Posterior vena cava (tissue), 2 donors: ENCODE measurements at regions of chr16 and their contacts with region 1.

Region 1: DNA sequence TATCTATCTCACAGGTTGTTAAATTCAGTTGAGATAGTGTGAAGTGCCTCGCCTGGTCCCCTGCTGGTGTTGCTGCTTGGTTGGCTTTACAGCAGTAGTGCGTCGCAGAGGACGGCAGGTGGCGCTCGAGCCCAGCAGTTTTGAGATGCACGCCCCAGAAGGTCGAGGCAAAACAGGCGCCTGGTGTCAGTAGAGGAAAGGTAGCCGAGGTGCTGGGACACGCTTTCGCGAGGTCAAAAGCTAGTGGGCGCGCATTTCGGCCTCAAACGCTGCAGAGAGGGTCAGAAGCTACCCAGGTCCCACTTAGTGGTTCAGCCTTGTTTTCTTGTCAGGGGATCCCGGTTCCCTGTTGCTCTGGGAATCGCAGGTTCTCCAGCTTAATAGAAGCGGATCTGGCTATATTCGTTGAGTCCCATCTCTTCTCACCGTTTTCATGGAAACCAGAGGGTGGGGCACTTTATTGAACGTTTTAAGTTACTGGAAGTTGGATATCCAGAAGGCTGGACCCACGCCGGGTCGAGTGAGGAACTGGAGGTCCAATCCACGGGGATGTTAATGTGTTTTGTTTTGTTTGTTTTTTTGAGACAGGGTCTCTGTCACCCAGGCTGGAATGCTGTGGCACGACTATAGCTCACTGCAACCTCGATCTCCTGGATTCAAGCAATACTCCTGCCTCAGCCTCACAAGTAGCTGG is 10.3 kb upstream of the ZFP90 start:
- DNase-seq: peak; percentile 96

Region 2: GRCh38 chr16:68310761-68311511 is 217.9 kb before region 1 on chr16 and contains the starts of genes PRMT7 and SLC7A6OS:
- intact Hi-C with region 1: no loop called
- DNase-seq: peak; percentile 96
- total RNA-seq, gene PRMT7: 18.1 to 22.9 TPM
- total RNA-seq, gene SLC7A6OS: 9.9 to 12.5 TPM

Region 3: GRCh38 chr16:68553186-68553585 is 24.4 kb after region 1 on chr16:
- intact Hi-C with region 1: no loop called
- DNase-seq: no peak

Region 4: DNA sequence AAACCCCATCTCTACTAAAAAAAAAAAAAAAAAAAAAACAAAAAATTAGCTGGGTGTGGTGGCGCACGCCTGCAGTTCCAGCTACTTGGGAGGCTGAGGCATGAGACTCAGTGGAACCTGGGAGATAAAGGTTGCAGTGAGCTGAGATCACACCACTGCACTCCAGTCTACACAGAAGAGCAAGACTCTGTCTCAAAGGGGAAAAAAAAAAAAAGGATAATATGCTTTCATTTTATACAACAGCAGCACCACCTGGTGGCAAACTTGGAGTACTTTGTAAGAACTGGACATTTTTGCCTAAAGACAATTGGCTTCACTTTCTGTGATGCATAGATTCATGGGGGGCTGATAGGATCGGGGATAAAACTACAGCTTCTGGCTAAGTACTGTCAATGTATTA is 595.1 kb after region 1 on chr16:
- intact Hi-C with region 1: loop called in 1 of 2 experiments (anchors 10 kb)
- DNase-seq: no peak